ENCODE measurements at regions of chr4 and their contacts with region 1.

Region 1: DNA sequence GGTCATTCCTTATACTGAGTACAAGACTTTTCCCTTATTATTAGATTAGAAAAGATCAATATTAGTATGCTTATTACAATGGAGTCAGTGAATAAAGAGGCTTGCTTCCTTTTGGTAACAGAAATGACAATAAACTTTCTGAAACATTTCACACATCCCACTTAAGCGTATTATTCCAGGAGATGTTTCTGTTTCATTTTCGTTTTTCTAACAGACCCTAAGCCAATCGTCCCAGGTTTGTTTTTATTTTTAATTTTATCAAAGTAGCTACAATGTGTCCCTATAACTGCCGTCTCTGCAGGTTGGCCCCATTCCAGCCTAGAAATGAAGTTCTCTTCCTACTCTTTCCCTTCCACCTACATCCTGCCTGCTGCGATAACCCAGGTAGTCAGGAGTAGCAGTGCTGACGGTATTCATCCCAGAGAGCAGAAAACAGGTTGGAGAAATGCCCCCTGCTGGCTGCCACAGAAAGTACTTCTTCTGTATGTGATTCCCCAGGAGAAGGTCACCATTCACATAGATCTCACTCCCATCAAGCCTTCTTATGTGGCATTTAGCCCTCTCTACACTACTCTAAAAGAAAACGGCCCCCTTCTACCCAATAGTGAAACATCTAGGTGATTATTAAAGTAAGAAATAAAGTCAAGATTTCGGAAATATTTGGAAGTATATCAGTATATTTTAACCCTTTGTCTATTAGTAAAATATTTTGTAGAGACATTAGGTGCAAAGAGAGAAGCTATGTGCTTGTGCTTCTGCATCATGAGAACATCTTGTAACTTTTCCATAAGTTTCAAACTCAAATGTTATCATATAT is 40.4 kb downstream of the ENPEP start:
- DNase-seq: peak; percentile 88
- H3K4me3 ChIP-seq: peak overlapping the region; percentile 25 to 52 (median 41)
- H3K27ac ChIP-seq: peak overlapping the region; percentile 27 to 73 (median 53)
- H3K4me1 ChIP-seq: peaks cover 0 to 8% (median 1%) of the 10 kb centered on the region in 4 donors
- H3K27me3 ChIP-seq: peaks cover 5% of the 10 kb centered on the region
- CTCF ChIP-seq: peak; percentile 71 to 86 (median 74)
- EP300 ChIP-seq: no peak
- POLR2A ChIP-seq: no peak

Region 2: GRCh38 chr4:109406338-109406931 is 1109.9 kb before region 1 on chr4:
- in situ Hi-C with region 1: loop called in 1 of 4 experiments (anchors 25 kb)
- intact Hi-C with region 1: no loop called
- DNase-seq: no peak
- H3K4me3 ChIP-seq: no peak overlapping the region
- H3K27ac ChIP-seq: no peak overlapping the region
- H3K4me1 ChIP-seq: no peaks in the 10 kb centered on the region
- H3K27me3 ChIP-seq: no peaks in the 10 kb centered on the region
- CTCF ChIP-seq: peak; percentile 43 to 63 (median 54)
- EP300 ChIP-seq: no peak
- POLR2A ChIP-seq: no peak

Region 3: GRCh38 chr4:109998867-109999584 is 517.3 kb before region 1 on chr4:
- in situ Hi-C with region 1: loop called in 2 of 4 experiments (anchors 5 kb)
- intact Hi-C with region 1: loop called (anchors 5 kb)
- DNase-seq: no peak
- H3K4me3 ChIP-seq: no peak overlapping the region
- H3K27ac ChIP-seq: no peak overlapping the region
- H3K4me1 ChIP-seq: peaks cover 0 to 5% (median 0%) of the 10 kb centered on the region in 4 donors
- H3K27me3 ChIP-seq: no peaks in the 10 kb centered on the region
- CTCF ChIP-seq: peak; percentile 58 to 80 (median 65)
- EP300 ChIP-seq: no peak
- POLR2A ChIP-seq: no peak

Region 4: DNA sequence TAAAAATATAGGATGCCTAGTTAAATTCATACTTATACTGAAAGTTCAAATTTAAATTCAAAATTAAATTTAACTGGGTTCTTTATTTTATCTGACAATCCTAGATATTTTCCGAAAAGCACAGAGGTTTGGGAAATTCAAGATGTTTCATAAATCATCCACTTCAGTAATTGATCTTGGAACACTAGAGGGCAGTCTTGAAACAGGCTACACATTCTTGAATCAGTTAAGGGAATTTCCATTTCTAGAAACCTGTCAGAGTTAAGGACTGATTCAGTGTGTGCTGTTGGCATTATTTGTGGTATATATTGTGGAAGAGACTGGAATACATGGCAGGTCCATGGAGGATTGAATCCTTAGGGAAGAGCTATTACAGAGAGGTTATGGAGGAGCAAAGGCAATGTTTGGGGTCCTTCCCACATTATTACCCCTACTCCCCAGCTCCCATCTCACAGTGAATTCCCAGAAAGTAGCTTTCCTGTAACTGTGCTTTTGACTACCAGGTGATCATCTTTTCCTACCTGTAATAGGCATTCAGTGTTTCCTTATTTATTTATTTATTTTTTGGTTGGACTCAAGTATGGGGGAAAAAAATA is 510.8 kb before region 1 on chr4:
- in situ Hi-C with region 1: loop called in 1 of 4 experiments (anchors 5 kb)
- intact Hi-C with region 1: no loop called
- DNase-seq: no peak
- H3K4me3 ChIP-seq: no peak overlapping the region
- H3K27ac ChIP-seq: no peak overlapping the region
- H3K4me1 ChIP-seq: no peaks in the 10 kb centered on the region
- H3K27me3 ChIP-seq: no peaks in the 10 kb centered on the region
- CTCF ChIP-seq: peak; percentile 54 to 67 (median 61)
- EP300 ChIP-seq: no peak
- POLR2A ChIP-seq: no peak

Region 5: DNA sequence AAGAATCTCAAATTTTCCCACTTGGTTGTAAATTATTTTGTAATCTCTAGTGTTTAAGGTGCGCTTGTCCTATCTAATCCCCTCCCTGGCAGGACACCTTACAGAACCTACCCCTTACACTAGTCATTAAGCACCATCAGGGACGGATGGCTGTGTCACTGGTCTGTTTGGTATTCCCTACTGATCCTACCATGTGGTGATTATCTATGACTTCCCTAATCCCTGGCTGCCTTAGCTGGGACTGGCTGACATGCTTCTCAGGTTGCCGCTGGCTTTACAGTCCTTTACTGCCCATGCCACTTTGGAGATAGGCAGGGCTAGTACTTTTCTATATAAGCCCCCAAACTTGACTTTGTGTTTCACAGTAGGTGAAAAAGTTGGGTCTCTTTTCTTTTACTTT is 376.5 kb before region 1 on chr4:
- in situ Hi-C with region 1: no loop called
- intact Hi-C with region 1: no loop called
- DNase-seq: no peak
- H3K4me3 ChIP-seq: no peak overlapping the region
- H3K27ac ChIP-seq: no peak overlapping the region
- H3K4me1 ChIP-seq: peaks cover 0 to 13% (median 6%) of the 10 kb centered on the region in 4 donors
- H3K27me3 ChIP-seq: no peaks in the 10 kb centered on the region
- CTCF ChIP-seq: no peak
- EP300 ChIP-seq: no peak
- POLR2A ChIP-seq: no peak

Region 6: DNA sequence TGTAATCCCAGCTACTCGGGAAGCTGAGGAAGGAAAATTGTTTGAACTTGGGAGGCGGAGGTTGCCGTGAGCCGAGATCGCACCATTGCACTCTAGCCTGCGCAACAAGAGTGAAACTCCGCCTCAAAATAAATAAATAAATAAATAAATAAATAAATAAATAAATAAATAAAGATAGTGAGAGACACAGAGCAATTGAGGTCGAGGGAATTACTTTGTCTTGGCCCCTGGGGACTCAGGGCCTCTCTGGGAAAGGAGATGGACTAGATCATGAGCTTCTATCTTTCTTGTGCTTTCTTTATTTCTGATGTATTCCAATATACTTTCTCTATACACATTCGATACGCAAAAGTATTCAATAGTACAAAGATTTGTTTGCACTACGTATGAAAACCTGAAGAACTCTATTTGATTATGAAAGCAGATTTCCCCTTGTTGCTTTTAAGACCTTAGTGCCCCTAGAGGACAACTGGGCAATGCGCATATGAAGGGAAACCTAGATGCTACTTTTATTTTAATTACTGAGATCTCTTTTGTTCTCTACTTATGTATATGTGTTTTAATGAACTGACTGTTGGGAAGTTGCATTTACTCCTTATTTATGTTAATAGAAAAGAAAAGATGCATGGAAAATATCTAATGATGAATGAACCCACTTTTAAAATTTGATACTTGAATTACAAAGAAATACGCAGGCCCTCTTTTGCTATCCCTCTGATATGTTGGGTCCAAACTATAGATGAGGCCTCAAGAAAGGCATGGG is 305.1 kb before region 1 on chr4:
- in situ Hi-C with region 1: loop called in 1 of 4 experiments (anchors 25 kb)
- intact Hi-C with region 1: no loop called
- DNase-seq: peak; percentile 25
- H3K4me3 ChIP-seq: no peak overlapping the region
- H3K27ac ChIP-seq: no peak overlapping the region
- H3K4me1 ChIP-seq: peaks cover 0 to 3% (median 0%) of the 10 kb centered on the region in 4 donors
- H3K27me3 ChIP-seq: no peaks in the 10 kb centered on the region
- CTCF ChIP-seq: peak; percentile 72 to 84 (median 76)
- EP300 ChIP-seq: no peak
- POLR2A ChIP-seq: no peak

Region 7: GRCh38 chr4:110344162-110344561 is 172.2 kb before region 1 on chr4:
- in situ Hi-C with region 1: loop called in 2 of 4 experiments (anchors 25 kb)
- intact Hi-C with region 1: no loop called
- DNase-seq: peak; percentile 16
- H3K4me3 ChIP-seq: no peak overlapping the region
- H3K27ac ChIP-seq: no peak overlapping the region
- H3K4me1 ChIP-seq: no peaks in the 10 kb centered on the region
- H3K27me3 ChIP-seq: no peaks in the 10 kb centered on the region
- CTCF ChIP-seq: peak; percentile 41 to 73 (median 44)
- EP300 ChIP-seq: no peak
- POLR2A ChIP-seq: no peak

Region 8: GRCh38 chr4:111018216-111018615 is 501.9 kb after region 1 on chr4:
- in situ Hi-C with region 1: no loop called
- intact Hi-C with region 1: no loop called
- DNase-seq: no peak
- H3K4me3 ChIP-seq: no peak overlapping the region
- H3K27ac ChIP-seq: no peak overlapping the region
- H3K4me1 ChIP-seq: no peaks in the 10 kb centered on the region
- H3K27me3 ChIP-seq: no peaks in the 10 kb centered on the region
- CTCF ChIP-seq: no peak
- EP300 ChIP-seq: no peak
- POLR2A ChIP-seq: no peak

Measured in transverse colon (tissue), 4 donors.